ENCODE measurements at regions of chr3 and their contacts with region 1.

Region 1: DNA sequence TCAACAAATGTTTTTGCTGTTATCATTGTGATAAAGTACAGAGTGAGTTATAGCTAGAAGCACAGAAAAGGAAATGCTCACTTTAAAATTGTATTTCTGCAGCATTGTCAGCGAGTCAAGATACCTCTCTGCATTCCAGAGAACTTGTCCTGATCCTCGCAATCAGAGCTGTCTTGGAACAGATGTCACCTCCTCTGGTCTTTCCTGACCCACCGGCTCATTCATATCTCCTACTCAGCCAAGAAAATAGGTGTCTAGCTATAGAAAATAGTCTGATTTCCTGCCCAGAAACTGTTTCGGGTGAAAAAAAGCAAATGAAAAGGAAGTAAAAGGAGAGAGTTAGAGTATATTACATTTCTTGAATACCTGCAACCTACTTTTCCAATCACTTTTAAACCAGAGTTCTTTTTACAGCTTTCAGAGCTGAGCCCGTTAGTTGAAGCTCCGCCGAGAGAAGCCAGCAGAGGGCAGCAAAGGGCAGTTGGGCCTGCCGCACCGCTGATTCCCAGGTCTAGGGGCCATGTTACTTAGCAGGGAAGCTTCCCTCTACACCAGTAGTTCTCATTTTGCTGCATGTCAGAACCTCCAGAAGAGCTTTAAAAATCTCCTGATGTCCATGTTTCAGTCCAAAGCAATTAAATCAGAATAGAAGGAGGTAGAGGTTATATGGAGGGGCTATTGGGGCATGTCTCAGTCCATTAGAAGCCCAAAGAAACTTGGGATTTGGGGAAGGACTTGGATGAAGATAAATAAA is 185.7 kb upstream of the THRB start:
- DNase-seq: peak; percentile 17 to 71 (median 67)
- H3K4me3 ChIP-seq: no peak overlapping the region
- H3K27ac ChIP-seq: no peak overlapping the region
- H3K4me1 ChIP-seq: no peaks in the 10 kb centered on the region
- H3K27me3 ChIP-seq: no peaks in the 10 kb centered on the region
- CTCF ChIP-seq: peak; percentile 37 to 71 (median 41)
- EP300 ChIP-seq: no peak
- POLR2A ChIP-seq: no peak

Region 2: DNA sequence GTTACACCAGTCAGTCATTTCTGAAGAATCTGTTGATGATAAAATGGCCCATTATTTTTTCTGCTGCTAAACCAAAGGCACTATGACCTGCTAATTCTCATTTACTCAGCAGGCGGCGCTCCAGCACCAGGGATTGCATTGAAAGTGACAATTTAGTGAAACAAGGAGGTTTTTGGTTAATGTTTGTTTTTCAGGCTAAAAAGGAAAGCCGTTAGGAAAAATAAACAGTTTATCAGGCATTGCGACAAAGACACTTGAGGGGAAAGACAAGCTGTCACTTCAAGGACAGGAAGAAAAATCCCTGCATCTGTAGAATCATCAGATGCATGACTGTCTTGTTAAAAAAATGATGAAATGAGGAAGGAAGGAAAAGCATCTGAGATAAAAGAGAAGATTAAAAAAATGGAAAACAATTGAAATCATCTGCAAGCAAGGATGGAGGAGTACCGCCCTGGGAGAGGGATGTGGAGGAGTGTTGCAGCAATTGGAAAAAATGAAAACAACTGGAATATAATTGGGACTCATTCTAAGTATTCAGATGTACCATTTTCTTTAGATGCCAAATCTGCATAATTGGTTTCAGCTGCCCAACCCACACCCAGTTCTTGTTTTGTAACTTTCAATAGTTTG is 681.3 kb before region 1 on chr3:
- intact Hi-C with region 1: loop called (anchors 5 to 10 kb)
- DNase-seq: peak; percentile 58 to 85 (median 82)
- H3K4me3 ChIP-seq: no peak overlapping the region
- H3K27ac ChIP-seq: no peak overlapping the region
- H3K4me1 ChIP-seq: peaks cover 1% of the 10 kb centered on the region
- H3K27me3 ChIP-seq: no peaks in the 10 kb centered on the region
- CTCF ChIP-seq: peak; percentile 59 to 96 (median 96)
- EP300 ChIP-seq: no peak
- POLR2A ChIP-seq: no peak

Region 3: DNA sequence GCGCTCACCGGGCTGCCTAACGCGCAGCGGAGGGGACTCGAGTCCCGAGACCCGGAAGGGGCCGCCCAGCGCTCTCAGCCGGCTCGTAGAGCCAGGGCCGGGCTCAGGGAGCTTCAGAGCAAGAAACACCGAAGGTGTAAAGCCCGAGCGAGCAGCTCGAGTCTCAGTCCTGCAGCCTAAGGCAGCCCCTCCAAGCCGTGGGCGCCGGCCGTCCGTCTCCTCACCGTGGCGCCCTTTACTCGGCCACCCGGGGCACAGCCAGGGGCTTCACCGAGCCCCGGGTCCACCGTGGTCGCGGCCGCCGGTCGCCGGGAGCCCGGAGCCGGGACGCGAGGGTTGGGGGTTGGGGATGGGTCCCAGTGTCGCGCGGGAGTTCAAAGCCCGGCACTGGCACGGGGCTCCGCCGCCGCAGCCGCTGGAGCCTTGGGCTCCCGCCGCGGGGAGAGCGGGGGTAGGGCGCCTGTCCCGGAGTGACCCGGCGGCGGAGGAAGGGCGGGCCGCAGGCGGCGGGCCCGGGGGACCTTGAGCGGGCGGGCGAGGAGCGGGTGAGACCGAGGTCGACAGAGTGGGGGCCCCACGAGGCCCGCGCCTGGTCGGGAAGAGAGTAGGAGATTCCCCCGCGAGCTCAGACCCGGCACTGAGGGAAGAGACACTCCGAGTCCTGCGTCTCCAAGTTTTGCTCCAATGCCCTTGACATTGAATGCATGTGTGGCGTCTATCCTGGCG is 158.8 kb before region 1 on chr3:
- intact Hi-C with region 1: no loop called
- DNase-seq: peak; percentile 28 to 68 (median 51)
- H3K4me3 ChIP-seq: peak overlapping the region; percentile 54
- H3K27ac ChIP-seq: peak overlapping the region in 1 of 2 donors; percentile 62
- H3K4me1 ChIP-seq: peaks cover 6% of the 10 kb centered on the region
- H3K27me3 ChIP-seq: no peaks in the 10 kb centered on the region
- CTCF ChIP-seq: no peak
- EP300 ChIP-seq: no peak
- POLR2A ChIP-seq: no peak

Measured in ovary (tissue), 10 donors.